CD8-positive, alpha-beta T cell (primary cell): ENCODE measurements at regions of chr4 and their contacts with region 1.

Region 1: DNA sequence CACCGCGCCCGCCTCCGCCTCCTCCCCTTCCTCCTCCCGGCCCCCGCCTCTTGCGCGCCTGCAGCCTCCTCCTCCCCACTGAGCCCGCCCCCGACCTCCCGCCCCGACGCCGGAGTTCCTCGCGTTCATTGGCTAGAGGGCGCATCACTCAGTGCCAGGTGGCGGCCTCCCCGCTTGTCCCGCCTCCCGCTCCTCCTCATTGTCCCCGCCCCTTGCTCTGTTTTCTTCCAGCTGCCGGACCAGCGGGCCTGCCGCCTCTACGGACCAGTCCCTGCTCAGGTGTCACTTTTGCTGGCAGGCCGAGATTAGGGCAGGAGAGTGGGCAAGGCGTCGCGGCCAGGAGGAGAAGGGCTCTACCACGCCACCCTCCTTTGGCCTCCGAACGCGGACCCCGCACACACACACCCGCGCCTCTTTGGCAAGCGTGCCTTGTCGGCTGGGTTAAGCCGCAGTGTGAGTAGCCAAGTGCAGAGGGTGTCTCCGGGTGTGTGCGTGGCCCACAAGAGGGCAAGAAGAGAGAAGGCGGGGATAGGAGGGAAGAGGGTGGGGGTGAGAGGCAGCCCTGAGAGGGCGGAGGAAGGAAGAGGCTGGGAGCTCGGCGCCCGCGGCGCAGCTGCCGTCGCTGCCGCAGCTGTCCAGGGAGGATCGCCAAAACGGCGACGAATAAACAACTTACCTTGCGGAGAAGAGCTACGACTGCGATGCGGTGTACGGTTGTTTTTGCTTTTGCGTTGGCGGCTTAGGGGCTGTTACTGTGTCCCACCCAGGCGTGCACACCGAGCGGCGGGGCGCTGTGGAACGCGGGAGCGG is 436 bp upstream of the PPP3CA start:
- DNase-seq: peak; percentile 98 to 100 (median 99)
- ATAC-seq: peak; percentile 85
- H3K4me3 ChIP-seq: peak overlapping the region; percentile 96 to 99
- H3K4me3 Mint-ChIP-seq: peak overlapping the region; percentile 98
- H3K27ac ChIP-seq: peak overlapping the region; percentile 71 to 82
- H3K27ac Mint-ChIP-seq: peak overlapping the region; percentile 94
- H3K4me1 ChIP-seq: peaks cover 10% of the 10 kb centered on the region
- H3K4me1 Mint-ChIP-seq: peaks cover 33% of the 10 kb centered on the region
- H3K27me3 ChIP-seq: peaks cover 0 to 3% of the 10 kb centered on the region in 2 experiments
- H3K27me3 Mint-ChIP-seq: peaks cover 15% of the 10 kb centered on the region
- CTCF ChIP-seq: no peak

Region 2: DNA sequence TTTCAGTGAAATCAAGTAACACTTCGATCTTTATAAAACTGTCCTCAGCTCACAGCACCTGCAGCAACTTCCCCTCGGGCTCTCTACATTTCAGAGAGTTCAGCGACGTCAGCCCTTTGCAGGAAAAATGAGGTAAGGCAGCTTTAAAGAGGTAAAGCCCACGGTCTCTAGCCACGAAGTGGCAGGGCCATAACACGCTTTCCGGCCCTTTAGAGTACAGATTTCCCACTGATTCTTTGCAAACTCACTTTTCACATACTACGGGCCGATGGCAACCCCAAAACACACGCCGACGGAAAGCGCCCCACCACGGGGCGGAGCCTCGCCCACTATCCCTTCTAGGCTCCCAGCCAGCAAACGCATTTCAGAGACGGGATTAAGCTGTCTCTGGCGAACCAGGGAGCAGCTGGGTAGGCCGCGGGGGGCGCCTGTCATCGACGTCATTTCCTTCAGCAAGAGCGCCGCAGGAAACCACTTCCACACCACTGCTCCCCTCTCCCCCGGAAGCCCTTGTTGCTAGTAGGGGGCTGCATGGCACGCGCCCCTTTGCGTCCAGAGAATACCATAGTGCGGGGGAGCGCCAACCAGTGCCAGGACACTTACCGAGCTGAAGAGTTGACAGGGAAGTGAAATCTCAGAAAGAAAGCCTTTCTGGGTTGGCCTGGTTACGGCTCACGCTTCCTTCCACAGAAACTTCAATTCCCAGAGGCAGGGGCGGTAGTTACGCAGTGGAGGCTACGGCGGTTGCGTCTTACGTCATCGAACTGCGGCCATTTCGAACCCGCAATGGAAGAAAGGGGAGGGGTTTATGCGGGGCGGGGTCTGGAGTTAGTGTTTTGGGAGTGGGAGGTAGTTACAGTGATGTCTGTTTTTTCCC is 1784.2 kb before region 1 on chr4 and contains the start of gene TRMT10A:
- CTCF ChIA-PET with region 1: no interaction called
- POLR2A ChIA-PET with region 1: no interaction called
- intact Hi-C with region 1: loop called in 1 of 2 experiments (anchors 1 kb)
- DNase-seq: peak; percentile 87 to 98 (median 95)
- ATAC-seq: peak; percentile 79
- H3K4me3 ChIP-seq: peak within 1 kb of the TSS; percentile 71 to 83
- H3K4me3 Mint-ChIP-seq: peak within 1 kb of the TSS; percentile 94
- H3K27ac ChIP-seq: peak within 1 kb of the TSS; percentile 92 to 96
- H3K27ac Mint-ChIP-seq: peak within 1 kb of the TSS; percentile 99
- H3K4me1 ChIP-seq: no peaks in the 10 kb centered on the region
- H3K4me1 Mint-ChIP-seq: peaks cover 19% of the 10 kb centered on the region
- H3K27me3 ChIP-seq: no peaks in the 10 kb centered on the region
- H3K27me3 Mint-ChIP-seq: peaks cover 19% of the 10 kb centered on the region
- CTCF ChIP-seq: no peak
- total RNA-seq, gene TRMT10A: 0.90 to 1.5 TPM

Region 3: GRCh38 chr4:101187841-101188240 is 159.9 kb before region 1 on chr4:
- CTCF ChIA-PET with region 1: no interaction called
- POLR2A ChIA-PET with region 1: no interaction called
- intact Hi-C with region 1: loop called (anchors 1 to 5 kb)
- DNase-seq: peak in 2 of 9 experiments; percentile 33 to 41
- ATAC-seq: no peak
- H3K4me3 ChIP-seq: no peak overlapping the region
- H3K4me3 Mint-ChIP-seq: no peak overlapping the region
- H3K27ac ChIP-seq: no peak overlapping the region
- H3K27ac Mint-ChIP-seq: no peak overlapping the region
- H3K4me1 ChIP-seq: peaks cover 4% of the 10 kb centered on the region
- H3K4me1 Mint-ChIP-seq: peaks cover 22% of the 10 kb centered on the region
- H3K27me3 ChIP-seq: no peaks in the 10 kb centered on the region
- H3K27me3 Mint-ChIP-seq: no peaks in the 10 kb centered on the region
- CTCF ChIP-seq: peak; percentile 47

Region 4: DNA sequence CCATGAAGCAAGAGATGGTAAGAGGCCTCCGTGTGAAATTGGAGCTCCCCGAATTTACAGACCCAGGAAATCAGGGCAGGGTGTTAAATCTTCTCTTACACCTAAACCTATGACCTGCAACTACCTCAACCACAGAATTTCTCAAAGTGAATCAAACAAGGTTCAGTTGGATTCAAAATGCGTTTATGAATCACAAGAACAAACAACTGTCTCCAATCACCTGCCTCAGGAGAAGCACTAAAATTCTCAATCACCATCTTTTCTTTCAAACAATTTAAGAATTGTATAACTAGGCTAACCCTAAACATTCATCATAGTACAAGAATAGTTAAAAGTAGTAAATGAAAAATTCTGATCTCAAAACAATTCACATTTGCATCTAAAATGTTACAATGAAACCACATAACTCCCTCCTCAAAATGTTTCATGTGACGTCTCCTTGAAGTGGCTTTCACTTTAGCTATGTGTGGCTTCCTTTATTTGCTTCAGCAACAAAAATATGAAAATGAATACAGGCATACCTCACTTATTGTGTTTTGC is 19.6 kb before region 1 on chr4:
- CTCF ChIA-PET with region 1: interaction called, 5 read pairs
- POLR2A ChIA-PET with region 1: interaction called, 26 read pairs
- intact Hi-C with region 1: loop called (anchors 1 kb)
- DNase-seq: peak in 3 of 9 experiments; percentile 27 to 84 (median 70)
- ATAC-seq: peak; percentile 84
- H3K4me3 ChIP-seq: peak overlapping the region; percentile 15
- H3K4me3 Mint-ChIP-seq: peak overlapping the region; percentile 70
- H3K27ac ChIP-seq: peak overlapping the region; percentile 20 to 71
- H3K27ac Mint-ChIP-seq: peak overlapping the region; percentile 91
- H3K4me1 ChIP-seq: peaks cover 28% of the 10 kb centered on the region
- H3K4me1 Mint-ChIP-seq: peaks cover 68% of the 10 kb centered on the region
- H3K27me3 ChIP-seq: no peaks in the 10 kb centered on the region
- H3K27me3 Mint-ChIP-seq: no peaks in the 10 kb centered on the region
- CTCF ChIP-seq: no peak

Region 5: GRCh38 chr4:102500696-102501446 is 1153.1 kb after region 1 on chr4 and contains the start of gene NFKB1:
- CTCF ChIA-PET with region 1: no interaction called
- POLR2A ChIA-PET with region 1: no interaction called
- intact Hi-C with region 1: loop called in 1 of 2 experiments (anchors 10 kb)
- DNase-seq: peak; percentile 60 to 97 (median 78)
- ATAC-seq: peak; percentile 67
- H3K4me3 ChIP-seq: peak within 1 kb of the TSS; percentile 88 to 93
- H3K4me3 Mint-ChIP-seq: peak within 1 kb of the TSS; percentile 95
- H3K27ac ChIP-seq: peak within 1 kb of the TSS; percentile 95 to 100
- H3K27ac Mint-ChIP-seq: peak within 1 kb of the TSS; percentile 98
- H3K4me1 ChIP-seq: peaks cover 19% of the 10 kb centered on the region
- H3K4me1 Mint-ChIP-seq: peaks cover 29% of the 10 kb centered on the region
- H3K27me3 ChIP-seq: no peaks in the 10 kb centered on the region
- H3K27me3 Mint-ChIP-seq: no peaks in the 10 kb centered on the region
- CTCF ChIP-seq: no peak
- total RNA-seq, gene NFKB1: 278 to 289 TPM

Region 6: GRCh38 chr4:103075901-103076739 is 1728.4 kb after region 1 on chr4:
- CTCF ChIA-PET with region 1: no interaction called
- POLR2A ChIA-PET with region 1: no interaction called
- intact Hi-C with region 1: loop called in 1 of 2 experiments (anchors 10 kb)
- DNase-seq: peak; percentile 39 to 84 (median 64)
- ATAC-seq: peak; percentile 79
- H3K4me3 ChIP-seq: peak overlapping the region; percentile 80
- H3K4me3 Mint-ChIP-seq: peak overlapping the region; percentile 94
- H3K27ac ChIP-seq: peak overlapping the region; percentile 89 to 95
- H3K27ac Mint-ChIP-seq: peak overlapping the region; percentile 99
- H3K4me1 ChIP-seq: peaks cover 25% of the 10 kb centered on the region
- H3K4me1 Mint-ChIP-seq: peaks cover 49% of the 10 kb centered on the region
- H3K27me3 ChIP-seq: no peaks in the 10 kb centered on the region
- H3K27me3 Mint-ChIP-seq: no peaks in the 10 kb centered on the region
- CTCF ChIP-seq: no peak